ENCODE measurements at regions of chr1 and their contacts with region 1.

Region 1: GRCh38 chr1:188825477-188825876 is 1652.2 kb downstream of the BRINP3 start:
- DNase-seq: no peak
- H3K4me3 ChIP-seq: no peak overlapping the region
- H3K27ac ChIP-seq: no peak overlapping the region
- H3K4me1 ChIP-seq: no peaks in the 10 kb centered on the region
- H3K27me3 ChIP-seq: no peaks in the 10 kb centered on the region
- CTCF ChIP-seq: no peak
- EP300 ChIP-seq: no peak
- POLR2A ChIP-seq: no peak

Region 2: GRCh38 chr1:187696073-187696472 is 1129.4 kb before region 1 on chr1:
- in situ Hi-C with region 1: no loop called
- intact Hi-C with region 1: loop called (anchors 5 kb)
- DNase-seq: no peak
- H3K4me3 ChIP-seq: no peak overlapping the region
- H3K27ac ChIP-seq: no peak overlapping the region
- H3K4me1 ChIP-seq: no peaks in the 10 kb centered on the region
- H3K27me3 ChIP-seq: no peaks in the 10 kb centered on the region
- CTCF ChIP-seq: no peak
- EP300 ChIP-seq: no peak
- POLR2A ChIP-seq: no peak

Measured in transverse colon (tissue), 4 donors.